ENCODE measurements at regions of chr1 and their contacts with region 1.

Region 1: DNA sequence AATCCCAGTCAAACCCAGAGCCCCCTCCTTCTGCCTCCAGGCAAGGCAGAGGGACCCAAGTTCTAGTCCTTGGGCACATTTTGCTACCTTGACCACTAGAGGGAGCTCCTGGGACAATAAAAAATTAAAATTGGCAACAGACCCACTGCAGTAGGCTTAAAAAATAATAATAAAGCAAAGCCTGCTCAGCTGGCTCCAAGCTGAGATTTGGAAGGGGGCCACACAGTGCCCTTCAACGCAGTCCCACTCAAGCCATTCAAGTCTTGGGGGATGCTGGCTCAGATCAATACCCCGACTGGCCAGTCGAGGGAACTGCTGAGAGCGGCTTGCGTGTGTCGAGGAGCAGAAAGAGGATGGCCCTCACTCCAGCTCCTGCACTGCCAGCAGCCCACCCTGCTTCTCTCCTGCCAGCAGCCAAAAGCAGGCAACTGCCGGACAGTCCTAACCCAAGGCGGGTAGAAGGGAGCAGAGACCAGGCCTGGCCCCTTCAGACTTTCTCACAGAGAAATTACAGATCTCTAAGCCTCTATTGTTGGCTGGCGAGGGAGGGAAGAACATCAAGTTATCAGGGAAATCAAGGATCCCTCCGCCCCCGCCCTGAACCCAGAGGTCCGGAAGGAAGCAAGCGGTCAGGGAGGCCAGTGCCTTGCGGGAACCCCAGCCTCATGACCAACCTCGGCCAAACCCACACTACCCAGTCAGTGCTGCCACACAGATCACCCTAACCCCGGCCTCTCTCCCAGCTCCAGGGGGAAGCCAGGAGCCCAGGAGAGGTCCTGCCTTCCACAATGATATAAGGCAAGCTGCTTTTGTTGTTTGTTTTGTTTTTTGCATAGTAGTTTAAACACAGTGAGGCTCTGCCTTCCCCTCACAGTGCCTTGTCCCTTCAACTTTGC is 4.9 kb upstream of the ALDH4A1 start:
- DNase-seq: peak; percentile 71 to 83 (median 82)
- ATAC-seq: peak; percentile 20 to 63
- H3K4me3 ChIP-seq: no peak overlapping the region
- H3K27ac ChIP-seq: peak overlapping the region; percentile 76
- H3K4me1 ChIP-seq: peaks cover 2% of the 10 kb centered on the region
- H3K27me3 ChIP-seq: no peaks in the 10 kb centered on the region

Region 2: GRCh38 chr1:18956369-18957135 is 49.3 kb after region 1 on chr1 and contains the start of gene IFFO2:
- intact Hi-C with region 1: loop called in 2 of 4 experiments (anchors 5 kb)
- DNase-seq: peak; percentile 98 to 100 (median 99)
- ATAC-seq: peak; percentile 98
- H3K4me3 ChIP-seq: peak within 1 kb of the TSS; percentile 86
- H3K27ac ChIP-seq: peak within 1 kb of the TSS; percentile 70
- H3K4me1 ChIP-seq: peaks cover 6% of the 10 kb centered on the region
- H3K27me3 ChIP-seq: no peaks in the 10 kb centered on the region
- total RNA-seq, gene IFFO2: 6.7 to 12.7 (median 8.1) TPM

Region 3: GRCh38 chr1:19096036-19096833 is 189.0 kb after region 1 on chr1:
- intact Hi-C with region 1: loop called (anchors 2 to 5 kb)
- DNase-seq: peak; percentile 44 to 76 (median 74)
- ATAC-seq: peak; percentile 82 to 90
- H3K4me3 ChIP-seq: no peak overlapping the region
- H3K27ac ChIP-seq: no peak overlapping the region
- H3K4me1 ChIP-seq: no peaks in the 10 kb centered on the region
- H3K27me3 ChIP-seq: no peaks in the 10 kb centered on the region

Region 4: GRCh38 chr1:19123837-19124236 is 216.6 kb after region 1 on chr1:
- intact Hi-C with region 1: no loop called
- DNase-seq: peak in 1 of 3 donors; percentile 28
- ATAC-seq: peak in 1 of 2 donors; percentile 31
- H3K4me3 ChIP-seq: no peak overlapping the region
- H3K27ac ChIP-seq: no peak overlapping the region
- H3K4me1 ChIP-seq: no peaks in the 10 kb centered on the region
- H3K27me3 ChIP-seq: no peaks in the 10 kb centered on the region

Measured in right cardiac atrium (tissue), 5 donors.